Activated CD8-positive, alpha-beta memory T cell treated with anti-CD3 and anti-CD28 coated beads, Interleukin-2, amount 10 ng/mL, durations not matched to agents 7 days and 5 days (primary cell): ENCODE measurements at regions of chr14 and their contacts with region 1.

Region 1: DNA sequence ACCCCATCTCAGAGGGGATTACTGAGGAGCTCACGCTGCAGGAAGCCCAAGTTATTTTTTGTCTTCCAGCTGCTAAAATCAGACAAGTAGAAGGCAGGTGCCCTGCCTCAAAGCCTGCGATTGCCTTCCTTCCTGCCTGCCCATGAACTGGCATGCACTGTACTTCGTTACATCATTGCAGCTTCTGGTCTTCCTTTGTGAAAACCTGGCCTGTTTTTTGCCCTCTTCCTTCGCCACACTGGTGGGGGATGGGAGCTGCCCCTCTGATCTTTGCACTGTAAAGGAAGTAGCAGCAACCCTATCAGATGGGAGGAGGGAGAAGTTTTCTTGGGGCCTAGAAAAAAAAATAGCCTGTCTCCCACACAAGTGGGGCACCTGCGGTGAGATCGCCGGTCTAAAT is 1098.7 kb downstream of the BCL11B start:
- DNase-seq: peak; percentile 65
- ATAC-seq: peak; percentile 8
- H3K4me3 Mint-ChIP-seq: peak overlapping the region; percentile 30
- H3K27ac Mint-ChIP-seq: peak overlapping the region; percentile 89
- H3K4me1 Mint-ChIP-seq: peaks cover 86% of the 10 kb centered on the region
- H3K27me3 Mint-ChIP-seq: no peaks in the 10 kb centered on the region

Region 2: DNA sequence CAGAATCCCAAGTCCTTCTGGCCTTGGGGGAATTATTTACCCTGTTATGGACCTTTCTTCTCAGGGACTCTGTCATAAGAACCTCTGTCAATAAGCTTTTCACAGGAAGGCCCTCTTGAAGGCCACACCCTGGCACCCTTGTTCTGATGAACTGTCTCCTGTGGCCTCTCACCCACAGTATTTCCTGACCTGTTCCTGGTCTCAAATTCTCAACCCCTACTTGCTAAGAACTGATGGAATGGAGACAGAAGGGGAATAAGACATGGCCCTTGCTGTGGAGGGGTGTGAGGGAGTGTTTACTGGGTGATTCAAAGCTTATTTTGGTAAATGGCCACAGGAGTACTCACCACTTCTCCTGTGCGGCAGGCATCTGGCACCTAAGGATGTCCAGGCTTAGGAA is 15.8 kb after region 1 on chr14:
- CTCF ChIA-PET with region 1: interaction called, 27 read pairs
- DNase-seq: peak; percentile 80
- ATAC-seq: peak; percentile 73
- H3K4me3 Mint-ChIP-seq: peak overlapping the region; percentile 79
- H3K27ac Mint-ChIP-seq: peak overlapping the region; percentile 98
- H3K4me1 Mint-ChIP-seq: peaks cover 90% of the 10 kb centered on the region
- H3K27me3 Mint-ChIP-seq: no peaks in the 10 kb centered on the region

Region 3: DNA sequence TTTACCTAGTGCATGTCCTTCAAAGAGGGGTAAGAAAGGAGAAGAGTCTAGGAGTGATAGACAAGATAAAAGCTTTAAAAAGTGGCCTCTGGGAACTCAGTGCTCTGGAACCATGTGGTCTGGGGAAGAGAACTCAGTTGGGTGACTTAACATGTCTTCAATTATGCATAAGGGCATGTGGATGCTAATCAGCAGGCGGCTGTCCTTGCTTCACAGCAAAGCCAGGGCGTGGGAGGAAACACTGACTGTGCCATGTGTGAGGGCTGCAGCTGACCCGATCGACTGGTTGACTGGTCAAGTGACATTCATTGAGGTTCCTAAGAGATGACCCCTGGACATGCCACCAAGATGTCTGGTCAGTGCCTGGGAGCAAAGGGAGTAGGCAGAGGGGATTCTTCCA is 44.9 kb after region 1 on chr14:
- CTCF ChIA-PET with region 1: no interaction called
- DNase-seq: no peak
- ATAC-seq: no peak
- H3K4me3 Mint-ChIP-seq: no peak overlapping the region
- H3K27ac Mint-ChIP-seq: no peak overlapping the region
- H3K4me1 Mint-ChIP-seq: peaks cover 16% of the 10 kb centered on the region
- H3K27me3 Mint-ChIP-seq: no peaks in the 10 kb centered on the region